OCI-LY7 (cell line): ENCODE measurements at regions of chr7 and their contacts with region 1.

Region 1: DNA sequence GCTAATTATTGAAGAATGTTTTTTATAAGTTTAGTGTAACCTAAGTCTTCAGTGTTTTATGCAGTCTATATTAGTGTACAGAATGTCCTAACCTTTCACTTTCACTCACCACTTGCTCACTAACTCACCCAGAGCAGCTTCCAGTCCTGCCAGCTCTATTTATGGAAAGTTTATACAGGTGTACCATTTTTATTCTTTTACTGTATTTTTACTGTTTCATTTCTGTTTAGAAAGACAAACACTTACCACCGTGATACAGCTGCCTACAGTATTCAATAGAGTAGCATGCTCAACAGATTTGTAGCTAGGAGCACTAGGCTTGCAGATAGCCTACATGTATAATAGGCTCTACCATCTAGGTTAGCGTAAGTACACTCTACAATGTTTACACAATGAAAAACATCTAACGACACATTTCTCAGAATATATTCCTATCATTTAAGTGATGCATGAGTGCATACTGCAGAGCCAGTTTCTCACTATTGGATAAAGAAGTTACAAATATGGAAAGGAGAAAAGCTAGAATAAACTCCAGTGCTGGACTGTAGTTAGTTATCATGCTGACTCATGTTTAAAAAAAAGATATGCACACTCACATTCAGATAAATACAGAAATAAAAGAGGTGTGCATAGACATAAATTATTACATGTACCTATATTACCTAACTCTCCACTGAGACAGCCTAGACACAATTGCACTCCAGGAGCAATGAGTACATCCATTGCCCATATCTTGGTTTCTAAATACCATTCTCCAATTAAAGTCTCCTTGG is 30.4 kb downstream of the STEAP1B start:
- DNase-seq: no peak
- H3K4me3 ChIP-seq: no peak overlapping the region
- H3K27ac ChIP-seq: no peak overlapping the region
- H3K4me1 ChIP-seq: peaks cover 7% of the 10 kb centered on the region
- CTCF ChIP-seq: no peak

Region 2: GRCh38 chr7:22255834-22256233 is 213.7 kb before region 1 on chr7:
- CTCF ChIA-PET with region 1: no interaction called
- POLR2A ChIA-PET with region 1: no interaction called
- intact Hi-C with region 1: no loop called
- DNase-seq: no peak
- H3K4me3 ChIP-seq: no peak overlapping the region
- H3K27ac ChIP-seq: no peak overlapping the region
- H3K4me1 ChIP-seq: no peaks in the 10 kb centered on the region
- CTCF ChIP-seq: no peak

Region 3: DNA sequence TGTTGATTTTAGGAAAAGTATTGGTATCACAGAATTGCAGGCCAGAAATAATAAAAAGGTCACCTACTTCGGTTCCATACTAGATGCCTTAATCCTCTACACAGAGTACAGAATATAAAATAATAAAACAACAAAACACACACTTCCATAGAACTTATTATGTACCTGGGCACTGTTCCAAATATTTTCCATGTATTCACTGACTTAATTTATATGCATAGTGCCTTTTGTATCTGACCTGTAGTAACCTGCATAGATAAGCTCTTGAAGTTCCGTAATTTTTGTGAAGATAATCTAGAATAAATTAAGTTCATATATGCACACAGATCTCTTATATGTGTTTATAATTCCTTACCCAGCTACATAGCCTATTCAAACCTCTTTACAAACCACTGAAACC is 190.9 kb before region 1 on chr7:
- CTCF ChIA-PET with region 1: no interaction called
- POLR2A ChIA-PET with region 1: no interaction called
- intact Hi-C with region 1: no loop called
- DNase-seq: no peak
- H3K4me3 ChIP-seq: no peak overlapping the region
- H3K27ac ChIP-seq: no peak overlapping the region
- H3K4me1 ChIP-seq: no peaks in the 10 kb centered on the region
- CTCF ChIP-seq: no peak

Region 4: DNA sequence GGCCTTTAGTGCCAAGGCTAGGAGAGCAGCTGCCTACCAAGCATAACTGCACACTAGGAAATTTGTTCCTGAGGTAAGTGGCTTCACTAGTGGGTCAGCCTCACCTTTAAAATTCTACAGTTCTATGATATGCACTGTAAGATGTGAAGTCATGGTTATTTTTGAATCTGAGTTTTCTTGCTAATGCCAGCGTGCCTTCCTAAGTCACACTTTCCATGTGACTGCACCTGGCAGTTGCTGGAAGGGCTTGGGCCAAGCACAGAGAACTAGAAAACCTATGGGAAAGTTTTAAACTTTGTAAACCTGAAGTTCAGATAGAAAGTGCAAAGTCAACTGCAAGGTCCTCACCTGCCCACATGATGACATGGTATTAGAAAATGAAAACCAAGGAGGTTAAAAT is 12.1 kb before region 1 on chr7:
- CTCF ChIA-PET with region 1: interaction called, 3 read pairs
- POLR2A ChIA-PET with region 1: interaction called, 11 read pairs
- intact Hi-C with region 1: no loop called
- DNase-seq: no peak
- H3K4me3 ChIP-seq: no peak overlapping the region
- H3K27ac ChIP-seq: no peak overlapping the region
- H3K4me1 ChIP-seq: peaks cover 20% of the 10 kb centered on the region
- CTCF ChIP-seq: no peak

Region 5: GRCh38 chr7:22481726-22482125 is 12.2 kb after region 1 on chr7:
- CTCF ChIA-PET with region 1: interaction called, 3 read pairs
- POLR2A ChIA-PET with region 1: interaction called, 11 read pairs
- intact Hi-C with region 1: no loop called
- DNase-seq: peak; percentile 88
- H3K4me3 ChIP-seq: peak overlapping the region; percentile 38
- H3K27ac ChIP-seq: peak overlapping the region; percentile 62
- H3K4me1 ChIP-seq: peaks cover 48% of the 10 kb centered on the region
- CTCF ChIP-seq: no peak

Region 6: GRCh38 chr7:22559829-22560489 is 90.4 kb after region 1 on chr7:
- CTCF ChIA-PET with region 1: no interaction called
- POLR2A ChIA-PET with region 1: no interaction called
- intact Hi-C with region 1: no loop called
- DNase-seq: peak; percentile 84
- H3K4me3 ChIP-seq: no peak overlapping the region
- H3K27ac ChIP-seq: no peak overlapping the region
- H3K4me1 ChIP-seq: peaks cover 21% of the 10 kb centered on the region
- CTCF ChIP-seq: peak; percentile 100

Region 7: DNA sequence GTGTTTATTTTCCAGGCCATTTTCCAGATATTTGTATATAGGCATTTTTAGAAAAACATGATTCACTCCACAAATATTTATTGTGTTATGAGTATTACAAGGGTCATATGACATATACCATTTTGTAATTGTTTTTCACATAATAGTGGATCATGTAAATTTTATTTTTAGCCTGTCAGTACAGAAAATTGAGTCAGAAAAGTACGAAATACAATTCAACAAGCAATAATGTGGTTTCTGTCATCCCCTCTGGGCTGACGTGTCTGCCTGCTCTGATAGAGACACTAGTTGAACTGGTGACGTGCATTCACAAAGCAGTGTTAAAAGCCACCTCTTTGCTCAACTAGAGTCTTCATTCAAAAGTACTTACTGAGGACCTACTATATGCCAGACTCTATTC is 128.3 kb after region 1 on chr7:
- CTCF ChIA-PET with region 1: no interaction called
- POLR2A ChIA-PET with region 1: no interaction called
- intact Hi-C with region 1: no loop called
- DNase-seq: no peak
- H3K4me3 ChIP-seq: no peak overlapping the region
- H3K27ac ChIP-seq: no peak overlapping the region
- H3K4me1 ChIP-seq: no peaks in the 10 kb centered on the region
- CTCF ChIP-seq: no peak

Region 8: DNA sequence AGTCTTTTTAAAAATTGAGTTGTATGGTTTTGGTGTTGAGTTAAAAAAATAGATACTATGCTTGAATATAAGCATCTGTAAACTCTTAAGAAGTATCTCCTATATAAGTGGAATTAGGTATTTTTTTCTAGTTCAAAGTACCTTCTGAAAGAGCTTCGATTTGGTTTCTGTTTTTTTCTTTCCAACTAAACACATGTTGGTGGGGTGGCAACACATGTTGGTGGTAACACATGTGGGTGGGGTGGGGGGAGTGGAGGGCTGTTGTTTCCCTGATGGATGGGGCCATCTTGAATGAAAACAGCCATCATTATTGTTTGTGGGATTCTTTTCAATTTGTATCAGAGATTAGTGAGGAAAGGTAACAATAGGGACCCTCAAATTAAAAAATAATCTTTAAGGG is 1419.4 kb after region 1 on chr7:
- CTCF ChIA-PET with region 1: no interaction called
- POLR2A ChIA-PET with region 1: interaction called, 10 read pairs
- intact Hi-C with region 1: no loop called
- DNase-seq: no peak
- H3K4me3 ChIP-seq: no peak overlapping the region
- H3K27ac ChIP-seq: no peak overlapping the region
- H3K4me1 ChIP-seq: no peaks in the 10 kb centered on the region
- CTCF ChIP-seq: no peak